ENCODE measurements at regions of chr16 and their contacts with region 1.

Region 1: DNA sequence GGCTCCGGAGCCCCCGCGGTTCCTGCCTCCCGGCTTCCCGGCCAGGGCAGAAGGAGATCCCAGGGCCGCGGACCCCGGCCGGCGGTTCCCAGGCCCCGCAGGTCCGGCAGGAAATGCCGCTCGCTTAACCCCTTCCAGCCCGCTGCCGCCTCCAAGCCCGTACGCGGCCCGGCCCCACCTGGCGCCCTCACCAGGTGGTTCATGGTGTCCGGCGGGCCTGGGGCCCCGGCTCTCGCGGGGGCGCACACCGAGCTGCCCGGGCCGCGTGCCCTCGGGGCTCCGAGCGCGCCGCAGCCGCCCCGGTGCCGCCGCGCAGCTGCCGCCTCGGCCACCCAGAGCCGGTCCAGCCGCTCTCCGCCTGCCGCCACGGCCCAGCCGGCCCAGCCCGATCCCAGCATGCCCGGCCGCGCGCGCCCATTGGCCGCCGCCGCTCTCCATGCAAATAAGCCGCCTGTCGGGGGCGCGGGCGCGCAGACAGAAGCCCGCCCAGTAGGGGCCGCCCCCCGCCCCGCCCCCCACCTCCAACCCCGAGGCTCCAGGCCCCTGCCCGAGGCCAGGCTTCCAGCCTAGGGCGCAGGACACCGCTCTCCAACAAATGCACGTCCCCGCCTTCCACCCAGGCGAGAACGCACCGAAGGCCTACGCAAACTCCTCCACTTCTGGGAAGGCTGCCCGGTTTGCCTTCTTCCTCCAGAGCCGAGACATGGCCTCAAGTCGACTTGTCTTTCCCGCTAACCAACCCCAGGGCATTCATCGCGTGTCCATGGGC is at the start of gene BCAR1:
- DNase-seq: peak; percentile 86
- ATAC-seq: peak; percentile 76
- H3K4me3 ChIP-seq: peak within 1 kb of the TSS; percentile 76 to 87 (median 86)
- H3K27ac ChIP-seq: peak within 1 kb of the TSS; percentile 97
- H3K4me1 ChIP-seq: peaks cover 84% of the 10 kb centered on the region
- H3K27me3 ChIP-seq: no peaks in the 10 kb centered on the region; a peak in 1 of 5 replicates
- CTCF ChIP-seq: peak; percentile 25
- EP300 ChIP-seq: no peak
- POLR2A ChIP-seq: no peak; a peak in 1 of 4 replicates
- RAD21 ChIP-seq: peak; percentile 80
- total RNA-seq, gene BCAR1: 35.9 and 48.1 TPM in 2 replicates

Region 2: GRCh38 chr16:75238132-75238852 is 13.2 kb before region 1 on chr16:
- CTCF ChIA-PET with region 1: no interaction called
- POLR2A ChIA-PET with region 1: interaction called, 27 read pairs
- in situ Hi-C with region 1: no loop called
- intact Hi-C with region 1: no loop called
- DNase-seq: peak; percentile 89
- ATAC-seq: peak; percentile 42
- H3K4me3 ChIP-seq: peak overlapping the region in 1 of 3 experiments; percentile 17; a peak in 1 of 6 replicates
- H3K27ac ChIP-seq: peak overlapping the region; percentile 77
- H3K4me1 ChIP-seq: peaks cover 59% of the 10 kb centered on the region
- H3K27me3 ChIP-seq: no peaks in the 10 kb centered on the region
- CTCF ChIP-seq: no peak
- EP300 ChIP-seq: peak in 1 of 2 experiments; percentile 65; a peak in 3 of 4 replicates
- POLR2A ChIP-seq: no peak
- RAD21 ChIP-seq: no peak

Region 3: GRCh38 chr16:75385507-75386152 is 134.2 kb after region 1 on chr16:
- CTCF ChIA-PET with region 1: interaction called, 3 read pairs
- POLR2A ChIA-PET with region 1: interaction called, 9 read pairs
- in situ Hi-C with region 1: no loop called
- intact Hi-C with region 1: loop called (anchors 5 kb)
- DNase-seq: peak; percentile 68
- ATAC-seq: no peak
- H3K4me3 ChIP-seq: no peak overlapping the region
- H3K27ac ChIP-seq: no peak overlapping the region
- H3K4me1 ChIP-seq: no peaks in the 10 kb centered on the region
- H3K27me3 ChIP-seq: no peaks in the 10 kb centered on the region
- CTCF ChIP-seq: peak; percentile 74
- EP300 ChIP-seq: no peak
- POLR2A ChIP-seq: no peak
- RAD21 ChIP-seq: peak; percentile 69; the same call in 1 of the 2 replicates